Panc1 (cell line): ENCODE measurements at regions of chr16 and their contacts with region 1.

Region 1: GRCh38 chr16:58336332-58337089 is 41.7 kb upstream of the PRSS54 start:
- DNase-seq: peak; percentile 74
- ATAC-seq: peak; percentile 88
- H3K4me3 ChIP-seq: peak overlapping the region in 1 of 2 experiments; percentile 26; a peak in 1 of 4 replicates
- H3K27ac ChIP-seq: no peak overlapping the region
- H3K4me1 ChIP-seq: 0 out of 2 replicates have a peak, but pooled peaks cover 5% of the 10 kb centered on the region
- H3K27me3 ChIP-seq: no peaks in the 10 kb centered on the region
- CTCF ChIP-seq: peak; percentile 89

Region 2: DNA sequence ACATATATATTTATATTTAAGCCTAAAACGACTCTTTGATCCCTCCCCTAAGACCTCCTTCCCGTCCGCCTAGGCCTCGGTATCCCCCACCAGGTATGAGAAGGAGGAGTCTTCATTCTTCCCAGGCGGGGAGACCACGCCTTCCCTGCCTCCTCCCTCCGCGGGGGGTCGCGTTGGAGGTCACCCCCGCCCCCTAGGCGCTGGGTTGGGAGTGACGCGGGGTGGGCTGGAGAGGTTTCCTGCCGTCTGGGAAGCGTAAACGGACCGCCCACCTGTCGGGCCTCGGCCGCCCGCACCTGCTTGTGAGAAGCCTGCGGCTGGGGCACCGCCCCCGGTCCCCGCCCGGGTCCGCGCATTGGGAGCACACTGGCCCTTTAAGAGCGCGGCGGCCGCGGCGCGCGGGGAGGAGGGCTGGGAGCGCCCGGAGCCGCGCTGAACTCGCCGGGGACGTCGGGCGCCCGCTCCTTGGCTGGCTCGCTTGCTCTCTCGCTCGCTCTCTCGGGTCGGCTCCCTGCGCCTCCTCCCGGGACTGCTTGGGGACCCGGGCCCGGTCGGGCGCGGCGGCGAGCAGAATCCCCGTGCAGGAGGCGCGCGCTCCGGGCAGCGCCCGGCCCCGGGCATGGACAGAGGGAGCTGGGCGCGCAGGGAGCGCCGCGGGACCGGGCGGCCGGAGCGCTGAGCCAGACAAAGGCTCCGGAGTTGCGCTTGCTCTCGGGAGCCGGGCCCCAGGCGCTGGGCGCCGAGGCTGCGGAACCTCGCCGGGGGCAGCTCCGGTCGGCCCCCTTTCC is 311.0 kb before region 1 on chr16 and contains the start of gene MMP15:
- CTCF ChIA-PET with region 1: no interaction called
- POLR2A ChIA-PET with region 1: no interaction called
- in situ Hi-C with region 1: no loop called
- intact Hi-C with region 1: no loop called
- DNase-seq: no peak
- ATAC-seq: peak; percentile 79
- H3K4me3 ChIP-seq: peak within 1 kb of the TSS; percentile 53 to 62
- H3K27ac ChIP-seq: peak within 1 kb of the TSS; percentile 48; the same call in 1 of the 2 replicates
- H3K4me1 ChIP-seq: peaks cover 10% of the 10 kb centered on the region; the same call in 1 of the 2 replicates
- H3K27me3 ChIP-seq: no peaks in the 10 kb centered on the region
- CTCF ChIP-seq: no peak
- total RNA-seq, gene MMP15: 10.9 TPM

Region 3: DNA sequence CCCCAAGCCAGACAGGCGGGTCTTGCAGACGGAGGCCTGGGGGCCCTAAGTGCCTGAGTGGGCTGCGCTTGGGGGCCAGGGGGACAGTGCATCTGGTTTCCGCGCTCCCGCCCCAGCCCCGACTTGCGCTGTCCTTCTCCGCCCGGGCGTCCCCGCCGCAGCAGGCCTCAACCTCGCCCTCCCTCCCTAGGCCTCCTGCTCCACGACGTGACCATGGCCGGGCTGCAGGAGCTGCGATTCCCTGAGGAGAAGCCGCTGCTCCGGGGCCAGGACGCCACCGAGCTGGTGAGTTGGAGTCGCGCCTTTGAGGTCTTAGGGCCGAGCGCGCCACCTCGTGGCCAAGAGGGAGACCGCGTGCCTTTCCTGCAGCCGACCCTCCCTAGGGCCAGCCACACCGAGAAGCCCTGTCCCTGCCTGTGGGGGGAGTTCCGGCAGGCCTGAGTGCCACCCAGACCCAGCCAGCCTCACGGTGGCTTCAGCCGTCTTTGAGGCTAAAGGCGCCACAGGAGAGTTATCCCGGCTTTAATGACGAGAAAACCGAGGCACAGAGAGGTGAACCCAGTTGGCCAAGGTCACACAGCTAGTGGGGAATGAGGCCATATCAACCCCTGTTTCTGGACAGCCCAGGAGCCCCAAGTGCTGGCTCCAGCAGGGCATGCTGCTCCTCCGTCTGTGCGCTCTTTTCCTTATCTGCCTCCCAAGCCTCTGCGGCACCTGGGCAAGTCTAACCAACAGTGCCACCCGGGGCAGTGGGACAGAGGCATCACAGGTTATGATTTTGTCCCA is 151.2 kb after region 1 on chr16:
- CTCF ChIA-PET with region 1: interaction called, 19 read pairs
- POLR2A ChIA-PET with region 1: interaction called, 15 read pairs
- in situ Hi-C with region 1: no loop called
- intact Hi-C with region 1: loop called (anchors 1 kb)
- DNase-seq: no peak
- ATAC-seq: peak; percentile 89
- H3K4me3 ChIP-seq: no peak overlapping the region
- H3K27ac ChIP-seq: no peak overlapping the region
- H3K4me1 ChIP-seq: no peaks in the 10 kb centered on the region
- H3K27me3 ChIP-seq: no peaks in the 10 kb centered on the region
- CTCF ChIP-seq: peak; percentile 87